Heart left ventricle (tissue), 16 donors: ENCODE measurements at regions of chr20 and their contacts with region 1.

Region 1: GRCh38 chr20:5788385-5788895 is 38.2 kb downstream of the SHLD1 start:
- DNase-seq: peak; percentile 69 to 84 (median 80)
- ATAC-seq: peak; percentile 83 to 95 (median 94)
- H3K4me3 ChIP-seq: no peak overlapping the region
- H3K27ac ChIP-seq: no peak overlapping the region
- H3K4me1 ChIP-seq: peaks cover 0 to 21% (median 15%) of the 10 kb centered on the region in 12 donors
- H3K27me3 ChIP-seq: no peaks in the 10 kb centered on the region
- CTCF ChIP-seq: peak; percentile 83 to 97 (median 91)
- POLR2A ChIP-seq: no peak

Region 2: GRCh38 chr20:5529331-5530148 is 258.9 kb before region 1 on chr20:
- intact Hi-C with region 1: loop called in 9 of 10 experiments (anchors 1 to 5 kb)
- DNase-seq: peak; percentile 73 to 91 (median 79)
- ATAC-seq: peak; percentile 73 to 92 (median 88)
- H3K4me3 ChIP-seq: peak overlapping the region in 3 of 12 donors; percentile 1 to 25 (median 23)
- H3K27ac ChIP-seq: no peak overlapping the region
- H3K4me1 ChIP-seq: peaks cover 0 to 22% (median 6%) of the 10 kb centered on the region in 12 donors
- H3K27me3 ChIP-seq: no peaks in the 10 kb centered on the region
- CTCF ChIP-seq: peak; percentile 56 to 90 (median 74)
- POLR2A ChIP-seq: no peak

Region 3: DNA sequence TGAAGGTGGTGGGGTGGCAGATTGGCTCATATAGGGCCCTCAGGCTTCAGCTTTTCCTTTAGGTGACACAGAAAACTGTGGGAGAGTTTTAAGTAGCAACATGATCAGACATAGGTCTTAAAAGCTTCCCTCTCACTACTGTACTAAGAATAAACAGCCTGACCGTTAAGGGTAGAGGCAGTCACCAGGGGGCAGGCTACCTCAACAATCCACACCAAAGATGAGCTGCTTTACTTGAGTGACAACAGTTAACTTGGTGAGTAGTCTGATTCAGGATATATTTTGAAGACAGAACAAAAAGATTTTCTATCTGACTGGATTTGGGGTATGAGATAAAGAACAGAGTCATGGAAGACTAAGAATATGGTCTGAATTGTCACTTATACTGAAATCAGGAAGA is 231.3 kb before region 1 on chr20:
- intact Hi-C with region 1: loop called in 3 of 10 experiments (anchors 1 to 5 kb)
- DNase-seq: peak in 4 of 5 donors; percentile 31 to 46 (median 34)
- ATAC-seq: peak in 3 of 4 donors; percentile 71 to 79 (median 72)
- H3K4me3 ChIP-seq: no peak overlapping the region
- H3K27ac ChIP-seq: no peak overlapping the region
- H3K4me1 ChIP-seq: peaks cover 0 to 9% (median 0%) of the 10 kb centered on the region in 12 donors
- H3K27me3 ChIP-seq: no peaks in the 10 kb centered on the region
- CTCF ChIP-seq: peak; percentile 33 to 69 (median 52)
- POLR2A ChIP-seq: no peak

Region 4: DNA sequence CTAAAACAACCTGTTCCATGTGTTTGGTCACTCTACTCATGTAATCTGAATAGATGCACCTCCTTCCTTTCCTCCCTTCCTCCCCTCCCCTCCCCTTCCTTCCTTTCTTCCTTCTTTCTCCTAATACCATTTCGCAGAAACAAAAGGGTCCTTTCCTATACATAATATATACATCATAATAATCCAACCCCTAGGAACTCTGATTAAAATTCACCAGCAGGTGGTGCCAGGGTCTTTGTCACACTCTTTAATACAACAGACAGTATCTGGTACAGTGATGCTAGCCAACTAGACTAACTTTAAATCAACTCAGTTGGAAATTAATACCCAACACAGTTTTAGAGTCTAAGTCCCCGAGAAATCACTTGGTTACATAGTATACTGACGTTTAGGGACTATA is 219.4 kb before region 1 on chr20:
- intact Hi-C with region 1: loop called in 8 of 10 experiments (anchors 1 to 5 kb)
- DNase-seq: peak in 1 of 5 donors; percentile 22
- ATAC-seq: peak in 2 of 4 donors; percentile 65 to 67
- H3K4me3 ChIP-seq: no peak overlapping the region
- H3K27ac ChIP-seq: peak overlapping the region in 1 of 12 donors; percentile 84
- H3K4me1 ChIP-seq: peaks cover 0 to 21% (median 0%) of the 10 kb centered on the region in 12 donors
- H3K27me3 ChIP-seq: no peaks in the 10 kb centered on the region
- CTCF ChIP-seq: peak; percentile 33 to 63 (median 48)
- POLR2A ChIP-seq: no peak

Region 5: GRCh38 chr20:5608442-5609161 is 179.8 kb before region 1 on chr20:
- intact Hi-C with region 1: loop called in 2 of 10 experiments (anchors 10 kb)
- DNase-seq: no peak
- ATAC-seq: no peak
- H3K4me3 ChIP-seq: peak overlapping the region in 10 of 12 donors; percentile 1 to 90 (median 82)
- H3K27ac ChIP-seq: peak overlapping the region in 7 of 12 donors; percentile 94 to 98 (median 96)
- H3K4me1 ChIP-seq: peaks cover 0 to 61% (median 27%) of the 10 kb centered on the region in 12 donors
- H3K27me3 ChIP-seq: no peaks in the 10 kb centered on the region
- CTCF ChIP-seq: no peak
- POLR2A ChIP-seq: no peak